ENCODE measurements at regions of chr1 and their contacts with region 1.

Region 1: GRCh38 chr1:8987881-8988617 is 38.2 kb downstream of the SLC2A7 start:
- DNase-seq: peak; percentile 44 to 53
- ATAC-seq: peak; percentile 57 to 74; a peak in 3 of 6 replicates
- H3K4me3 ChIP-seq: no peak overlapping the region
- H3K27ac ChIP-seq: peak overlapping the region; percentile 79 to 95
- H3K4me1 ChIP-seq: peaks cover 31% of the 10 kb centered on the region
- CTCF ChIP-seq: peak; percentile 81
- EP300 ChIP-seq: no peak
- POLR2A ChIP-seq: no peak
- RAD21 ChIP-seq: peak; percentile 77 to 79

Region 2: DNA sequence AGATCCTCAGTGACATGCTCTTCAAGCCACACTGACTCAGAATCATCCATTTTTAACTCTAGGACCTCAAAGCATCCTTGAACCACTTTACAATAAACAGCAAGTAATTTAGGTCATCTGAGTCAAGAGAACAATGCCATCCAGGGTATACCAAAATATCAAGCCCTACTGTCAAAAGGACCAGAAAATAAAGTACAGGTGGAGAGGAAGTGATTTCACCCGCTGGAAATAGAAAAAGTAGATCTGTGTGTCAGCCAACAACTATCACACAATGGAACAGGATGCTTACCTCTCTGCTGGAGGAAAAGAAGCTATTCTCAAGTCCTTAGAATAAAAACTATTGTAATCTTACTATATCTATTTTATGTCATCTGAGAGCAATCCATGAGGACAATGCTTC is 207.6 kb before region 1 on chr1:
- CTCF ChIA-PET with region 1: no interaction called
- POLR2A ChIA-PET with region 1: no interaction called
- DNase-seq: no peak
- ATAC-seq: no peak
- H3K4me3 ChIP-seq: no peak overlapping the region
- H3K27ac ChIP-seq: no peak overlapping the region
- H3K4me1 ChIP-seq: peaks cover 5% of the 10 kb centered on the region; the same call in 2 of the 3 replicates
- CTCF ChIP-seq: no peak
- EP300 ChIP-seq: no peak
- POLR2A ChIP-seq: no peak
- RAD21 ChIP-seq: no peak

Region 3: DNA sequence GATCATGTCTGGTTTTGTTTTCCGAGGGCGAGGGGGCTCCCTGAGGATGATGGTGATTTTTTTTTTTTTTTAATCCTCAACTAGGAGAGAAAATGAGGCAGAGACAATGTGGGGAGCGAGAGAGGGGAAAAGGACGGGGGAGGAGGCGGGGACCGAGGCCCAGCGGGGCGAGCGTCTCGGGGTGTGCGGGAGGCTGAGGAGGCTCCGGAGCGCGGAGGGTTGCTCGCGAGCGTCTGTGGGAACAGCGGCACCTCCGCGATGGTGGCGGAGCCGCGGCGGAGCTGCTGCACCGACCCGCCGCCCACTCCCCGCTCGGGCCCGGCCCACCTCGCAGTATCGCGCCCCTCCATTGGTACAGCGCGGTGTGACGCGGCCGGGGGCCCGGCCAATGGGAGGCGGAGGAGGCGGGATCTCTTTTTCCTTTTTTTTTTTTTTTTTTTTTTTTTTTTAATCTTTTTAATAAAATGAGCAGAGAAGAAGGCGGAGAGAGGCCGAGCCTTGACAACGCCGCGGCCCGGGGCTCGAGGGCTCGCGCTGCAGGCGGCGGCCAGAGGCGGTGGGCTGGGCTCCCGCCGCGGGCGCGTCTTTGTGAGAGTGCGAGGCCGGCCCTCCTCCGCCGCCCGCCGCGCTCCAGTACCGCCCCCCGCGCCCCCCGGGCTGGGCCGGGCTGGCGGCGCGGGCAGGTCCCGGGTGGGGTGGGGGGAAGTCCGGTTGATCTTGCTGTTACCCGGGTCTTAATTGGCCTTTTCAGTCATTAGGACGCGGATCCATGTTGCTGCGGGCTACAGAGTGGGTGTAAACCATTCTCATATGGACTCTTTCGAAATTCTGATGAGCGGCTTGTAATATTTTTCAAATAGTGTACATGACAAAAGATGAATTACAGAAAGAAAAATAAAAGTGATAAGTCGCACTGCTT is 170.4 kb before region 1 on chr1 and contains the start of gene RERE:
- CTCF ChIA-PET with region 1: no interaction called
- POLR2A ChIA-PET with region 1: no interaction called
- DNase-seq: peak; percentile 91 to 94
- ATAC-seq: peak; percentile 97 to 98
- H3K4me3 ChIP-seq: peak within 1 kb of the TSS; percentile 100
- H3K27ac ChIP-seq: peak within 1 kb of the TSS; percentile 93 to 99
- H3K4me1 ChIP-seq: peaks cover 39% of the 10 kb centered on the region
- CTCF ChIP-seq: no peak
- EP300 ChIP-seq: no peak
- POLR2A ChIP-seq: peak; percentile 78
- RAD21 ChIP-seq: no peak
- polyA plus RNA-seq, gene RERE: 12.6 and 36.8 TPM in 2 replicates

Region 4: DNA sequence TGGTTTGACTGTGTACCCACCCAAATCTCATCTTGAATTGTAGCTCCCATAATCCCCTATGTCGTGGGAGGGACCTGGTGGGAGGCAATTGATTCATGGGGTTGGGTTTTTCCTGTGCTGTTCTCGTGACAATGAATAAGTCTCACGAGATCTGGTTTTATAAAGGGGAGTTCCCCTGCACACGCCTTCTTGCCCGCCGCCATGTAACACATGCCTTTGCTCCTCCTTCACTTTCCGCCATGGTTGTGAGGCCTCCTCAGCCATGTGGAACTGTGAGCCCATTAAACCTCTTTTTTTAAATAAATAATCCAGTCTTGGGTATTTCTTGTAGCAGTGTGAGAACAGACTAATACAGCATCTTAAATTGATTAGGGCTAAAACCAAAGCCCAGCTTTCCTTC is 148.1 kb before region 1 on chr1:
- CTCF ChIA-PET with region 1: no interaction called
- POLR2A ChIA-PET with region 1: no interaction called
- DNase-seq: no peak
- ATAC-seq: no peak
- H3K4me3 ChIP-seq: no peak overlapping the region
- H3K27ac ChIP-seq: no peak overlapping the region
- H3K4me1 ChIP-seq: no peaks in the 10 kb centered on the region
- CTCF ChIP-seq: no peak
- EP300 ChIP-seq: no peak
- POLR2A ChIP-seq: no peak
- RAD21 ChIP-seq: no peak

Region 5: GRCh38 chr1:8911416-8911815 is 76.6 kb before region 1 on chr1:
- CTCF ChIA-PET with region 1: interaction called, 103 read pairs
- POLR2A ChIA-PET with region 1: no interaction called
- DNase-seq: peak in 1 of 2 experiments; percentile 44
- ATAC-seq: peak; percentile 28 to 32; a peak in 3 of 6 replicates
- H3K4me3 ChIP-seq: no peak overlapping the region
- H3K27ac ChIP-seq: no peak overlapping the region; a peak in 2 of 6 replicates
- H3K4me1 ChIP-seq: peaks cover 61% of the 10 kb centered on the region
- CTCF ChIP-seq: no peak
- EP300 ChIP-seq: no peak
- POLR2A ChIP-seq: no peak
- RAD21 ChIP-seq: no peak

Region 6: GRCh38 chr1:8925406-8925805 is 62.6 kb before region 1 on chr1:
- CTCF ChIA-PET with region 1: interaction called, 103 read pairs
- POLR2A ChIA-PET with region 1: no interaction called
- DNase-seq: no peak
- ATAC-seq: no peak
- H3K4me3 ChIP-seq: no peak overlapping the region
- H3K27ac ChIP-seq: no peak overlapping the region
- H3K4me1 ChIP-seq: no peaks in the 10 kb centered on the region
- CTCF ChIP-seq: no peak
- EP300 ChIP-seq: no peak
- POLR2A ChIP-seq: no peak
- RAD21 ChIP-seq: no peak

Region 7: GRCh38 chr1:8962812-8963530 is 25.1 kb before region 1 on chr1:
- CTCF ChIA-PET with region 1: interaction called, 23 read pairs
- POLR2A ChIA-PET with region 1: no interaction called
- DNase-seq: peak; percentile 74 to 82
- ATAC-seq: peak; percentile 84 to 96; a peak in 4 of 6 replicates
- H3K4me3 ChIP-seq: no peak overlapping the region
- H3K27ac ChIP-seq: no peak overlapping the region
- H3K4me1 ChIP-seq: no peaks in the 10 kb centered on the region
- CTCF ChIP-seq: peak; percentile 44
- EP300 ChIP-seq: no peak
- POLR2A ChIP-seq: no peak
- RAD21 ChIP-seq: peak in 1 of 2 experiments; percentile 50; a peak in 1 of 5 replicates

Region 8: DNA sequence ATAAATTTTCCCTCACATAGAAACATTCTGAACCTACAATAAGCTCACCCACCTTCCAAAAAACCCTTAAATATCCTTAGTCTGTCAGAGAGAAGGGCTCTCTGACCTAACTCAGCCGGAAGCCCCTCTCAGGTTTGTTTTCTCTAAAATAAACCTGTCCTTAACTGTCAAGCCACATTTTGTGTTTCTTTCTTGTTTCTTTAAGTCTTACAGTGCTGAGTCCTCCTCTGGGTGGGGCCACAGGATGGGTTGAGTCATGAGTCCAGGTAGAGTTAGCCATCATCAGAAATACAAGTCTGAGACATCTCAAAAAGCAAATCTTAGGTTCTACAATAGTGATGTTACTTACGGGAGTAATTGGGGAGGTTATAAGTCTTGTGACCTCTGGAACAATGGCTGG is 107.8 kb after region 1 on chr1:
- CTCF ChIA-PET with region 1: no interaction called
- POLR2A ChIA-PET with region 1: no interaction called
- DNase-seq: no peak
- ATAC-seq: no peak
- H3K4me3 ChIP-seq: no peak overlapping the region
- H3K27ac ChIP-seq: no peak overlapping the region
- H3K4me1 ChIP-seq: no peaks in the 10 kb centered on the region
- CTCF ChIP-seq: no peak
- EP300 ChIP-seq: no peak
- POLR2A ChIP-seq: no peak
- RAD21 ChIP-seq: no peak